ENCODE measurements at regions of chr4 and their contacts with region 1.

Region 1: GRCh38 chr4:85790582-85790981 is 315.6 kb downstream of the ARHGAP24 start:
- DNase-seq: no peak
- ATAC-seq: no peak
- H3K4me3 ChIP-seq: no peak overlapping the region
- H3K27ac ChIP-seq: peak overlapping the region in 1 of 12 donors; percentile 1
- H3K4me1 ChIP-seq: peaks cover 0 to 43% (median 15%) of the 10 kb centered on the region in 12 donors
- H3K27me3 ChIP-seq: no peaks in the 10 kb centered on the region
- CTCF ChIP-seq: no peak
- POLR2A ChIP-seq: no peak

Region 2: GRCh38 chr4:85756938-85757337 is 33.6 kb before region 1 on chr4:
- intact Hi-C with region 1: loop called in 1 of 10 experiments (anchors 5 kb)
- DNase-seq: peak in 1 of 5 donors; percentile 44
- ATAC-seq: peak in 3 of 4 donors; percentile 38 to 83 (median 59)
- H3K4me3 ChIP-seq: no peak overlapping the region
- H3K27ac ChIP-seq: no peak overlapping the region
- H3K4me1 ChIP-seq: peaks cover 0 to 36% (median 13%) of the 10 kb centered on the region in 12 donors
- H3K27me3 ChIP-seq: no peaks in the 10 kb centered on the region
- CTCF ChIP-seq: peak; percentile 22 to 64 (median 44)
- POLR2A ChIP-seq: no peak

Region 3: GRCh38 chr4:85860066-85860740 is 69.6 kb after region 1 on chr4:
- intact Hi-C with region 1: loop called in 1 of 10 experiments (anchors 10 kb)
- DNase-seq: no peak
- ATAC-seq: no peak
- H3K4me3 ChIP-seq: no peak overlapping the region
- H3K27ac ChIP-seq: no peak overlapping the region
- H3K4me1 ChIP-seq: peaks cover 0 to 24% (median 7%) of the 10 kb centered on the region in 12 donors
- H3K27me3 ChIP-seq: no peaks in the 10 kb centered on the region
- CTCF ChIP-seq: no peak
- POLR2A ChIP-seq: no peak

Region 4: GRCh38 chr4:86730310-86730709 is 939.7 kb after region 1 on chr4:
- intact Hi-C with region 1: no loop called
- DNase-seq: peak in 2 of 5 donors; percentile 12 to 56
- ATAC-seq: no peak
- H3K4me3 ChIP-seq: no peak overlapping the region
- H3K27ac ChIP-seq: no peak overlapping the region
- H3K4me1 ChIP-seq: no peaks in the 10 kb centered on the region
- H3K27me3 ChIP-seq: no peaks in the 10 kb centered on the region
- CTCF ChIP-seq: no peak
- POLR2A ChIP-seq: no peak

Measured in heart left ventricle (tissue), 16 donors.